Mucosa of descending colon (tissue), 3 donors: ENCODE measurements at regions of chr1 and their contacts with region 1.

Region 1: DNA sequence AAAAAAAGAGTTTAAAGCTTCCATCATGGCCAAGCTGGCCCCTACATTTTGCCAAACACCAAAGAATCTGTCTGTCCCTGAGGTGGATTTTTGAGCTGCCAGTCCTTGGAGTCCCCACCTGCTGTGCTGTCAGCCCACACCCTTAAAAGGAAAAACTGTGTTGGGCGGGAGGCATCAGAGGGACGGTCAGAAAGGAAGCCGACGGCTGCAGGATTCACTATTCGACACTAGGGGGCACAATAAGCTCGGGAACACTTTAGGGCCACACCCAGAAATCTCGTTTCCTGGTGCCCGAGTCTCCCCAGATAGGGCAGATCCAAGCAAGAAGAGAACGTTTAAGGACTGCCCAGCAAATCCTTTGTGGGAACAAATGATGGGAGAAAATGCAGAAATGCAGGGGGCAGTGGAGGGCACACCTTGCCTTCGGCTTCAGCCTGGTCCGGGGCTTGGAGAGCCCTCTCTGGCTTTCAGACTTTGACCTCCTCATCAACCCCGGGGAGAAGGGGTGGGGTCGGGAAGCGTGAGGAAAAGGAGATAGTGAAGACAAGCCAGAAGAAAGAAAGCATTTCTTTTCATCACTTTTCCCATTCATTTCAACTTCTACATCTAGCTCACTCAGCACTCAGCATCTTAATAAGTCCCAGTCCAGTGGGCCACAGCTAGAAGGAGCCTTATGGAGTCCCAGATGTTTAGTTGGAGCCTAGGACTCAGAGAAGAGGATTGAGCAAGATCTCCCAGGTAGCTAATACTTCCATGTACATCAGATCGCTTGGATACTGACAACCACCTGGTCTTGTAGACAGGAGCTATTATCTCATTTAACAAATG is 5.0 kb upstream of the CTTNBP2NL start:
- DNase-seq: peak; percentile 85 to 96 (median 89)
- ATAC-seq: peak; percentile 81
- H3K4me3 ChIP-seq: peak overlapping the region; percentile 3
- H3K4me1 ChIP-seq: peaks cover 22% of the 10 kb centered on the region
- CTCF ChIP-seq: peak; percentile 87

Region 2: DNA sequence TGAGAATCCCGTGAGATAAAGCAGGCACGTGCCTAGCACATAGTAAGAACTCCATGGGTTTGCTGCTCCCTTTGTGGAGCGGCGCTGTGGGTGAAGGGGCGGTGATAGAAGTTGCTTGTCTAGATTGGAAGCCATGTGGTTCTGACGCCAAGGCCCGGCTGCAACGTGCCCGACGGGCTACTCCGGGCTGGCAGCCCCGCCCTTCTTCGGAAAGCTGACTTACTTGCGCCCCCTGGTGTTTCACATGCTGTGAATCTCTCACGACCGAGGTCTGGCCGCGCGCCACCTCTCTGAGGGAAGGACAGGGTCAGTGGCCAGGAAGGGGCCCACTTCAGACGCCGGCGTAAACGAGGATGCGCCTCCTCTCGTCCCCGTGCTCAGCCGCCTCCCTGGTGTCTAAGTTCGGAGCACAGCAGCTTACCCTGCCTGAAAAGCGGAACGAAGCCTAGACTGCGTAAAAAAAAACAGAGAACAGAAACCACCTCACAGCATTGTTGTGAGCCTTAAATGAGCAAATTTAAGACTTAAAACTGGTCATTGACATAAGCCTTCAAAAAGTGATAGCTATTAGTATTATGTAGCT is 75.2 kb after region 1 on chr1:
- intact Hi-C with region 1: loop called (anchors 5 kb)
- DNase-seq: peak; percentile 94 to 98 (median 95)
- ATAC-seq: peak; percentile 93
- H3K4me3 ChIP-seq: no peak overlapping the region
- H3K4me1 ChIP-seq: peaks cover 16% of the 10 kb centered on the region
- CTCF ChIP-seq: peak; percentile 67

Region 3: DNA sequence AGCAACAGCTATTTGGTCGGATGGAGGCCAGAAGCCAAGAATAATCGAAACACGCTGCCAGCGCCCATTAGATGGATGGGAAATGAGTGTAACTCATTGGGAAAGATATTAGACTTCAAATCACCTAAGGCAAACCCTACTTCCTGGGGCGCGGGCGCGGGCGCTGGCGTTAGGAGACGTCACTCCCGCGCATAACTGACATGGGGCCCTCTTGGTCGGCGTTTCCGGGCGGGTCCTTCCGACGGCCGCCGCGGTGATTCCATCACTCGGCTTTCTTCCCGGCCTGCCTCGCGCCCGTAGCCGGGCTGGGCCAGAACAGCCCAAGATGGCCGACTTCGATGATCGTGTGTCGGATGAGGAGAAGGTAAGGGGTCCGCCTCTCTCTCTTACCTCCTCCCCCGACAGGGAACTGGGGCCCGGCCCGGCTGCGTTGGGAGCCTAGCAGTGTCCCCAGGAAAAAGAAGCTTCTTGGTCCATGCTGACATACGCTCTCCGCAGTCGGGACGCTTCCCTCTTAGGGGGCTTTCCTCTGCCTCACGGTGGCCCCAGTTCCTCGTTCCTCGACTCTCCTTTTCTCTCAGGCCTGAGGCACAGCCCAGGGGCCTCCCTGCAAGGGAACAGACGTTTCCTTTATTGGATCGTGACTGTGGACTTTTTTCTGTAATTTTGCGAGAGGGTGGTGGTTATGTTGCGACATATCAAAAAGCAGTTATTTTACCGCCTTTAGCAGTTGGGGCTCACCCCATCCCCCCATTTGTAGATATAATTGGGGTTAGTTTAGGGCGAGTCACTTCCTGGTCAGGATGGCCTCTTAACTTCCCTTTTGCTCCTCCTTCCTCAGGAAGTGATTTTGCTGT is 228.8 kb after region 1 on chr1 and contains the start of gene CAPZA1:
- intact Hi-C with region 1: loop called in 1 of 2 experiments (anchors 10 kb)
- DNase-seq: peak; percentile 93 to 97 (median 94)
- ATAC-seq: peak; percentile 95
- H3K4me3 ChIP-seq: peak within 1 kb of the TSS; percentile 87
- H3K4me1 ChIP-seq: peaks cover 20% of the 10 kb centered on the region
- CTCF ChIP-seq: no peak
- total RNA-seq, gene CAPZA1: 106 to 175 (median 156) TPM

Region 4: DNA sequence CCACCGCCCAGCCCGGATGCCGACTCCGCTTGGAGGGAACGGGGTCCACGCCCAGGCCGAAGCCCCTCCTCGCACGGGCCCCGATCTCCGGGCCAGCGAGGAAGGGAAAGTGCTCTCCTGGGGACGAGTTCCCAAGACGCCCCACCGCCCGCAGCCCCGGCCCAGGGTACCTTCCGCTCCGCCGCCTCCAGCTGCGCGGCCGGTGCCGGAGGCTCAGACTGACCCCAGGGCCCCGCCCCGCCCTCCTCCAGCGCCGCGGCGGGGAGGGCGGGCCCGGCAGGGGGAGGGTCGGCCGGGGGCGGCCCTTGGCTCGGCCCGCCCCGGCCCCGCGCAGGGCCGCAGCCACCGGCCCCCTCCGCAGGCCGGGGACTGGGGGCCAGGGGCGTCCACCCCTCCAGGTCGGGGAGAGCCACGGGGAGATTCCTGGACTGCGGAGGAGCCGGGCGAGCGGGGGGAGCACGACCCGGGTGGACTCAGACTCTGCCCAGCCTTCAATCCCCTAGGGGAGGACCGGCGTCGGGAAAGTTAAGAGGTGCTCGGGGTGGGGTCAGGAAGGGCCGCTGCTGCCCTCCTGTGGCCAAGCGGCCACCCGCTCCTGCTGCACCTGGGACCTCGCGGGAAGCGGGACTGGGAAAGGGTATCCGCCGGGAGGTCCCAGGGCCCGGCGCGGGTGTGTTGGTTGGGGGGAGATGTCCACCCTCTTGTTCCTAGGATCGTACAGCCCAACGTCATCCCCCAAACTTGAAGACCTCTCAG is 316.1 kb after region 1 on chr1 and contains the start of gene RHOC:
- intact Hi-C with region 1: loop called in 1 of 2 experiments (anchors 5 kb)
- DNase-seq: peak; percentile 92
- ATAC-seq: peak; percentile 78
- H3K4me3 ChIP-seq: peak within 1 kb of the TSS; percentile 94
- H3K4me1 ChIP-seq: peaks cover 32% of the 10 kb centered on the region
- CTCF ChIP-seq: peak; percentile 88
- total RNA-seq, gene RHOC: 306 to 617 (median 485) TPM